ENCODE measurements at regions of chr1 and their contacts with region 1.

Region 1: GRCh38 chr1:153494976-153495535 is 34.6 kb upstream of the S100A7 start:
- DNase-seq: peak; percentile 81
- H3K4me3 Mint-ChIP-seq: no peak overlapping the region
- H3K27ac Mint-ChIP-seq: no peak overlapping the region
- H3K4me1 Mint-ChIP-seq: peaks cover 27% of the 10 kb centered on the region
- H3K27me3 Mint-ChIP-seq: peaks cover 39% of the 10 kb centered on the region
- CTCF ChIP-seq: peak; percentile 99

Region 2: GRCh38 chr1:153375511-153375910 is 119.5 kb before region 1 on chr1 and contains the start of gene S100A12:
- CTCF ChIA-PET with region 1: interaction called, 12 read pairs
- POLR2A ChIA-PET with region 1: interaction called, 8 read pairs
- intact Hi-C with region 1: no loop called
- DNase-seq: peak; percentile 98
- H3K4me3 Mint-ChIP-seq: no peak within 1 kb of the TSS
- H3K27ac Mint-ChIP-seq: peak within 1 kb of the TSS; percentile 28
- H3K4me1 Mint-ChIP-seq: peaks cover 43% of the 10 kb centered on the region
- H3K27me3 Mint-ChIP-seq: no peaks in the 10 kb centered on the region
- CTCF ChIP-seq: no peak
- total RNA-seq, gene S100A12: not detected in 2 replicates

Region 3: GRCh38 chr1:153390938-153391710 is 103.9 kb before region 1 on chr1 and contains the start of gene S100A8:
- CTCF ChIA-PET with region 1: interaction called, 15 read pairs
- POLR2A ChIA-PET with region 1: interaction called, 3 read pairs
- intact Hi-C with region 1: no loop called
- DNase-seq: peak; percentile 99
- H3K4me3 Mint-ChIP-seq: peak within 1 kb of the TSS; percentile 66
- H3K27ac Mint-ChIP-seq: peak within 1 kb of the TSS; percentile 2
- H3K4me1 Mint-ChIP-seq: peaks cover 71% of the 10 kb centered on the region
- H3K27me3 Mint-ChIP-seq: no peaks in the 10 kb centered on the region
- CTCF ChIP-seq: no peak
- total RNA-seq, gene S100A8: 46.9 and 80.4 TPM in 2 replicates

Region 4: DNA sequence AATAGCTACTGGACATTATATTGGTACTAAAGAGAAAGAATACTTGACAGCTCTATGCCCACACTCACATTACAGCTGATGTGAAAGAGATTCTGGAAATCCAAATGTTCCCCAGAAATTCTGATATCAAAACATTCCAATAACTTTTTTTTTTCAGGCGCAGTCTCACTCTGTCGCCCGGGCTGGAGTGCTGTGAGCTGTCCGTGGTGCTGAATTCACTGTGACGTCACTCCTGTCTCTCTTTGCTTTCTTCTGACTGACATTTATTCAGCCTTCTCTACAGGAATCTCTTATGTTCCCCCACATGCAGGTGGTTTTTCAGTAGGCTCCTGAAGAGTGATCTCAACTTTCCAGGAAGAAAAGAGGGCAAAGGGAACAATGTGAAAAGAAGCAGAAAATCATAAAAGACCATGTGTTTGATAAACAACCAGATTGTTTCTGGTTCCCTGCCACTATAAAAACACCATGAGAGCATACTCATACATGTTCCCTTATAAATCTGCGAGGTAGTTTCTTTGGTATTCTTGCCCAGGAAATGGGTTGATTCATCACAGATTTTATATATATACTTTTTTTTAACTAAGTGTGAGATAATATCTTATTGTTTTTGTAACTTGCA is 72.5 kb before region 1 on chr1:
- CTCF ChIA-PET with region 1: interaction called, 12 read pairs
- POLR2A ChIA-PET with region 1: no interaction called
- intact Hi-C with region 1: no loop called
- DNase-seq: peak; percentile 84
- H3K4me3 Mint-ChIP-seq: no peak overlapping the region
- H3K27ac Mint-ChIP-seq: no peak overlapping the region
- H3K4me1 Mint-ChIP-seq: no peaks in the 10 kb centered on the region
- H3K27me3 Mint-ChIP-seq: peaks cover 86% of the 10 kb centered on the region
- CTCF ChIP-seq: no peak

Region 5: GRCh38 chr1:153510984-153511410 is 15.9 kb after region 1 on chr1:
- CTCF ChIA-PET with region 1: interaction called, 128 read pairs
- POLR2A ChIA-PET with region 1: interaction called, 4 read pairs
- intact Hi-C with region 1: no loop called
- DNase-seq: peak; percentile 87
- H3K4me3 Mint-ChIP-seq: no peak overlapping the region
- H3K27ac Mint-ChIP-seq: peak overlapping the region; percentile 73
- H3K4me1 Mint-ChIP-seq: peaks cover 60% of the 10 kb centered on the region
- H3K27me3 Mint-ChIP-seq: no peaks in the 10 kb centered on the region
- CTCF ChIP-seq: peak; percentile 100

Region 6: GRCh38 chr1:153526132-153526543 is 31.1 kb after region 1 on chr1:
- CTCF ChIA-PET with region 1: interaction called, 13 read pairs
- POLR2A ChIA-PET with region 1: interaction called, 3 read pairs
- intact Hi-C with region 1: no loop called
- DNase-seq: peak; percentile 94
- H3K4me3 Mint-ChIP-seq: peak overlapping the region; percentile 29
- H3K27ac Mint-ChIP-seq: peak overlapping the region; percentile 85
- H3K4me1 Mint-ChIP-seq: peaks cover 38% of the 10 kb centered on the region
- H3K27me3 Mint-ChIP-seq: no peaks in the 10 kb centered on the region
- CTCF ChIP-seq: no peak

Region 7: DNA sequence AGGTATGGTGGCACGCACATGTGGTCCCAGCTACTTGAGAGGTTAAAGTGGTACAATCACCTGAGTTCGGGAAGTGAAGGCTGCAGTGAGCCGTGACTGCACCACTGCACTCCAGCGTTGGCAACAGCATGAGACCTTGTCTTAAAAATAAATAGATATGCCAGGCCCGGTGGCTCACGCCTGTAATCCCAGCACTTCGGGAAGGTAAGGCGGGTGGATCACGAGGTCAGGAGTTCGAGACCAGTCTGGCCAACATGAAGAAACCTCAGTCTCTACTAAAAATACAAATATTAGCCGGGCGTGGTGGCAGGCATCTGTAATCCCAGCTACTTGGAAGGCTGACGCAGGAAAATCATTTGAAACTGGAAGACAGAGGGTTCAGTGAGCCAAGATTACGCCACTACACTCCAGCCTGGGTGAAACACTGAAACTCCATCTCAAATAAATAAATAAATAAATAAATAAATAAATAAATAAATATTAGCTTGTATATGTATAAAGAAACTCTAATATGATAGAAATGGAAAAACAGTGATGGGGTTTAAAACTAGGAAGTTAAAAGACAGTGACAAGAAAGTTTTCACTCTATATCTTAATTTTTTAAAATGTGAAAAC is 408.9 kb after region 1 on chr1:
- CTCF ChIA-PET with region 1: no interaction called
- POLR2A ChIA-PET with region 1: no interaction called
- intact Hi-C with region 1: no loop called
- DNase-seq: peak; percentile 53
- H3K4me3 Mint-ChIP-seq: no peak overlapping the region
- H3K27ac Mint-ChIP-seq: peak overlapping the region; percentile 66
- H3K4me1 Mint-ChIP-seq: peaks cover 5% of the 10 kb centered on the region
- H3K27me3 Mint-ChIP-seq: no peaks in the 10 kb centered on the region
- CTCF ChIP-seq: no peak